Endothelial cell of umbilical vein (primary cell): ENCODE measurements at regions of chr11 and their contacts with region 1.

Region 1: DNA sequence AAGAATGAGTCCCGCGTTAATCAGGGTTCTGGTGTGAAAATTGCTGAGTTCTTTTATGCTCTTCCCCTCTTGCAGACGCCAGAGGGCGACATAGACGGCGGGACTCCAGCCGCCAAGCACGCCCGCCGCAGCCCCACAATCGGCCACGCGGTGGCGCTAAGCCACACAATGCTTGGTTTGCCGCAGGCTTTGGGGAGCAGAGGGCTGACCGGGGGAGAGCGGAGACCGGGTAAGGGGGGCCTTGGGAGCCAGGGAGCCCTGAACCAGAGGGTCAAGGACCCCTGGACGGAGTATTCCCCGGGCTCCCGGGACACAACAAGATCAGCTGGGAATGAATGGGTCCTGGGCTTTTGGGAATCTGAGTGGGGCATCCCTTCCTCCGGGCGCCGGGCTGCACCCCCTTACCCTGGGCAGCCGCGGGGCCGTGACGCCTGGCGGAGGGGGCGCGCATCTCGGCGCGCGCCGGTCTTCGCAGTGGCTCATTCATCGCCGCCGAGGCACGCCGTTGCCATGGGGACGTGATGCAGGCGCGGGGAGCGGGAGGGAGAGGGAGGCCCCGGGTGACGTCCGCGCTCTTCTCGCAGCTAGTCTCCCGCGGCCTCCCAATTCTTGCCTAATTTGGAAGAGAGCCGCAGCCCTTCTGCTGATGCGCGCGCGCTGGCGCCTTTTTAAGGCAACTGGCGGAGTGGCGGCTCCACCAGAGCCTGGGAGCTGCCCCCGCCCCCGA is 12.2 kb upstream of the NPAS4 start:
- DNase-seq: peak; percentile 82
- H3K4me3 ChIP-seq: no peak overlapping the region
- H3K27ac ChIP-seq: no peak overlapping the region
- H3K4me1 ChIP-seq: no peaks in the 10 kb centered on the region
- H3K27me3 ChIP-seq: peaks cover 8 to 10% of the 10 kb centered on the region in 2 experiments
- CTCF ChIP-seq: peak; percentile 100
- POLR2A ChIP-seq: no peak

Region 2: DNA sequence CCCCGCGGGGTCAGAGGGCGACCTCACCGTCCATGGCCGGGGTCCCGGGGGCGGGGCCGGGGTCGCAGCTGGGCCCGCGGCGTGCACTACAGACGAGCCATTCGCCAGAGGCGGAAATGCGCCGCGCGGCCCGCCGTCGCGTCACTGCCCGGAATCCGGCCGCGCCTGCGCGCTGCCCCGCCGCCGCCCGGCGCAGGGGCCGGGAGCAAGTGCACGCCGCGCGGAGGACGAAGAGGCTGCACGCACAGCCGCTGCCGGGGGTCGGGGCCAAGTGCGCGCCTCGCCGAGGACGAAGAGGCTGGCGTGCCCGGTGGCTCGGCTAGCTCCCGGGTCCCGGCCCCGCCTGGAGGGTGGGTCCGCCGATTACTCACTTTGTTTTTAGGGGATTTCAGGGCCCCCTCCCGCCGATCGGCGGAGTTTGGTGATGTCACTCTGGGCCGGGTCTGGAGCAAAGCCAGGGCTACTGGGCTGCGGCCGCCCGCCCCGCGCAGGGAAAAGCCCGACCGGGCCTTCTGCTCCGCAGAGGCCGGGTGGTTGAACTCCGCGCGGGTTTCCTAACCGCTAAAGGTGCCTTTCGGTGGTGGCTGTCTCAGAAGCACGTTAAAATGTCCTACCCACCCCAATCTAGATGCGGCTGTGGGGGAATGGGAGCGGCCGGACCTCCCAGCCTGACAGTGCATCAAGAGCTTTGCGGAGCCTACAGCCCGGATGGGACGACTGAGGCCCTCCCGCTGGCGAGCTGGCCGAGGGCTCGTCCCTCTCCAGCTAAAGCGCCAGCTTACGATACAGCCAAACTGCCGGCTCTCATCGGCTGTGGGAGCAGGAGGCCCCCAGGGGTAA is 745.6 kb before region 1 on chr11 and contains the start of gene RELA:
- CTCF ChIA-PET with region 1: no interaction called
- POLR2A ChIA-PET with region 1: no interaction called
- dilution Hi-C with region 1: no loop called
- intact Hi-C with region 1: no loop called
- DNase-seq: peak; percentile 92
- H3K4me3 ChIP-seq: peak within 1 kb of the TSS; percentile 34 to 94 (median 77)
- H3K27ac ChIP-seq: peak within 1 kb of the TSS; percentile 91
- H3K4me1 ChIP-seq: peaks cover 18% of the 10 kb centered on the region
- H3K27me3 ChIP-seq: no peaks in the 10 kb centered on the region
- CTCF ChIP-seq: no peak
- POLR2A ChIP-seq: peak; percentile 87
- total RNA-seq, gene RELA: 105 and 106 TPM in 2 replicates

Region 3: GRCh38 chr11:65860278-65861164 is 548.1 kb before region 1 on chr11 and contains the start of gene MUS81:
- CTCF ChIA-PET with region 1: no interaction called
- POLR2A ChIA-PET with region 1: no interaction called
- dilution Hi-C with region 1: no loop called
- intact Hi-C with region 1: no loop called
- DNase-seq: peak; percentile 98
- H3K4me3 ChIP-seq: peak within 1 kb of the TSS; percentile 36 to 76 (median 71)
- H3K27ac ChIP-seq: peak within 1 kb of the TSS; percentile 77
- H3K4me1 ChIP-seq: peaks cover 39% of the 10 kb centered on the region
- H3K27me3 ChIP-seq: no peaks in the 10 kb centered on the region
- CTCF ChIP-seq: peak; percentile 93 to 97
- POLR2A ChIP-seq: peak; percentile 59
- total RNA-seq, gene MUS81: 68.4 and 76.9 TPM in 2 replicates

Region 4: GRCh38 chr11:65988791-65989592 is 419.7 kb before region 1 on chr11:
- CTCF ChIA-PET with region 1: no interaction called
- POLR2A ChIA-PET with region 1: no interaction called
- dilution Hi-C with region 1: no loop called
- intact Hi-C with region 1: no loop called
- DNase-seq: peak; percentile 97
- H3K4me3 ChIP-seq: no peak overlapping the region
- H3K27ac ChIP-seq: no peak overlapping the region
- H3K4me1 ChIP-seq: no peaks in the 10 kb centered on the region
- H3K27me3 ChIP-seq: no peaks in the 10 kb centered on the region
- CTCF ChIP-seq: peak; percentile 86 to 99
- POLR2A ChIP-seq: no peak

Region 5: DNA sequence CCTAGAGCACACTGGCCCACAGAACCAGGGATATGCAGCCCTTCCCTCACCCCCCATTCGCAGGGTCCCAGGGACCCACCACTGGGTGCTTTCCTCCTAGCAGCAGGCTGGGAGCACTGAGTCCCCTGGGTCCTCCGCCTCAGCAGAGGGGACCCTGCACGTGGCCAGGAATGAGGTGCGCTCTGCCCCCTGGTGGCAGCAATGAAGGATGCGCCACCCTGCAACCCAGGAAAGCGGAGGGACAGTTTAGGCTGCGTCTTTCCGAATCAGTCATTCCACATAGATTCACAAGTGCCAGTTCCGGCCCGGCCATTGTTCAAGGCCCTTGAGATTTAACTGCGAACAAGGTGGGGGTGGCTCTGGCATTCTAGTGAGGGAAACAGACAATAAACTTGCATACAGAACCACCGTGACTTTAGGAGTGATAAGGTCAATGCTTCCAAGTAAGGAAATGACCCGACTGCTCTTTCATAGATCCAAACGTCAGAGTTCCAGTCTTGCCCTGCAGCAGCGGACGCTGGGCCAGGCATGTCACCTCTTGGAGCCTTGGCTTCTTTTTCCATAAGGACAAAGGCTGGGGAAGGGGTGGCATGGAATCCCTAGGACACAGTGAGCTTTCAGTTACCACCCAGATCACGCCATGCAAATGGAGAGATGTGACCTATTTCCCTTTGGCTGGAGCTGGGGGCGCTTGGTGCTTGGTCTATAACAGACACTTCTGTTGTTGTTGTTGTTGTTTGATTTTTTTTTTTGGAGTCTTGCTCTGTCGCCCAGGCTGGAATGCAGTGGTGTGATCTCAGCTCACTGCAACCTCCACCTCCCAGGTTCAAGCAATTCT is 80.1 kb before region 1 on chr11:
- CTCF ChIA-PET with region 1: no interaction called
- POLR2A ChIA-PET with region 1: no interaction called
- dilution Hi-C with region 1: no loop called
- intact Hi-C with region 1: no loop called
- DNase-seq: peak; percentile 67
- H3K4me3 ChIP-seq: no peak overlapping the region
- H3K27ac ChIP-seq: no peak overlapping the region
- H3K4me1 ChIP-seq: peaks cover 7% of the 10 kb centered on the region
- H3K27me3 ChIP-seq: no peaks in the 10 kb centered on the region
- CTCF ChIP-seq: peak; percentile 93
- POLR2A ChIP-seq: no peak

Region 6: DNA sequence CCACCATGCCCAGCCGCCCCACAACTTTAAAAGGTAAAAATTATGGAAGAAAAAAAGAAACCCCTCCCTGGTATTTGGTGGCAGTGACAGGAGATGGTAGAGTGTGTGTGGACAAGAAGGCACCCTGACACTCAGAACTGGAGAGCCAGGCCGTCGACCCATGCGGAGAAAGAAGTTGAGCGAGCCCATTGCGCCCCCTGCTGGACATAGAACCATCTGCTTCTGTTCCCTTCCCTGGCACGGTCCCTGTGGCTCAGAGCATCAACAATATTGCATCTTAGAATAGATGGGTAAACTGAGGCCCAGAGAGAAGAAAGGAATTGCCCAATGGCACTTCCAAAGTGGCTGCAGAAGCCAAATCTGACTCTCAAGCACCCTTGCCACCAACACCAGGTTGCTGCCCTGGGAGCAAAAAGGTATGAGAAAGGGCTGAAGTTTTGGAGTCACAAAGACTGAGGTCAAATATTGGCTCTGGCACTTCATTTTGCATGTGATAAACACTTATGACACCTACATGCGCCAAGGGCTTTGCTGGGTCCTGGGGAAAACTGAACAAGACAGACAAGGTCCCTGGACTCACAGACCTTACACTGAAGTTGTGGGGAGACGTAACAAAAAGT is 21.4 kb after region 1 on chr11:
- CTCF ChIA-PET with region 1: interaction called, 87 read pairs
- POLR2A ChIA-PET with region 1: no interaction called
- dilution Hi-C with region 1: no loop called
- intact Hi-C with region 1: loop called (anchors 1 kb)
- DNase-seq: peak; percentile 45
- H3K4me3 ChIP-seq: no peak overlapping the region
- H3K27ac ChIP-seq: no peak overlapping the region
- H3K4me1 ChIP-seq: no peaks in the 10 kb centered on the region
- H3K27me3 ChIP-seq: no peaks in the 10 kb centered on the region
- CTCF ChIP-seq: peak; percentile 86 to 94
- POLR2A ChIP-seq: no peak

Region 7: DNA sequence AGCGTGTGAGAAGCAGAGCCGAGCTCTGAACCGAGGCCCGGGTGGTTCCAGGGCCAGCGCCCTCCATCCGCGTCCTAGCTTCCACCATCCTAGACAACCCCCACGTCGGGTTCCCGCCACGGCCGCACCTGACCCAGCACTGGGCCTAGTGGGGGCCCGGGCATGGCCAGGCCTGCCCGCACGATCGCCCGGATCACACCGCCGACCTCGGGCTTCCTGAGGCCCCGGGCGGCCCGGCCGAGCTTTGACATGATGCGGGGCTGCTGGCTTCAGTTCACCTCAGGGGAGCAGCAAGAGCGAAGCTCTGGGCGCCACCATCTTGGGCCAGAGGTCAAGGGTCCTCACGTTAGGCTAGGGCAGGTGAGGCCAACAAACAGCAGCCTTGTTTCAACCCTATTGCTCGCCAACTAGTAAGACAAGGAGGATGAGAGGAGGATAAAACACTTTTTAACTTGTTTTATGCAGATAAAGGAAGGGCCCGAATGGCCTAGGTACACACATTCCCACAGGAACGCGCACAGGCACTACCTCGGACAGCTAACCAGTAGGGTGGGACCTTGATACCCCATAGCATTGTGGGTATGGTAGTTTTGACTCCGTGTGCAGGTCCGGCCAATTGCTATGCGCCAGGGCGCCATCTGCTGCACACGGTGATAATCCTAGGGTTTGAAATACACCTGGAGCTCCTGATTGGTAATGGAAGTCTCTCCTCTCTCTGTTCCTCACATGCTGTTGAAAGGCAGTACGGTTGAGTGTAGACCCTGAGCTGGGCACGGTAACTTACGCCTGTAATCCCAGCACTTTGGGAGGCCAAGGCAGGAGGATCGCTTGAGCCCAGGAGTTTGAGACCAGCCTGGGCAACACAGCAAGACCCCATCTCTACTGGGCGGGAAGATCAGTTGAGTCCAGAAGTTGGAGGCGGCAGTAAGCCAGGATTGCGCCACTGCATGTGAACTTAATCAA is 30.1 kb after region 1 on chr11 and contains the start of gene MRPL11:
- CTCF ChIA-PET with region 1: interaction called, 87 read pairs
- POLR2A ChIA-PET with region 1: no interaction called
- dilution Hi-C with region 1: no loop called
- intact Hi-C with region 1: loop called (anchors 2 kb)
- DNase-seq: peak; percentile 95
- H3K4me3 ChIP-seq: peak within 1 kb of the TSS; percentile 59 to 80 (median 64)
- H3K27ac ChIP-seq: peak within 1 kb of the TSS; percentile 77
- H3K4me1 ChIP-seq: peaks cover 6% of the 10 kb centered on the region
- H3K27me3 ChIP-seq: no peaks in the 10 kb centered on the region
- CTCF ChIP-seq: peak; percentile 70 to 77
- POLR2A ChIP-seq: no peak
- total RNA-seq, gene MRPL11: 69.1 and 72.1 TPM in 2 replicates